Activated T-helper 1 cell treated with anti-CD3 and anti-CD28 coated beads, Interleukin-12 subunit alpha, Interleukin-12 subunit beta, Interleukin-2, Interleukin-4 antibody, amounts not matched to agents 30 ng/mL and 10 ng/mL and 1 ng/mL, durations not matched to agents 14 hours and 24 hours and 36 hours (primary cell): ENCODE measurements at regions of chr6 and their contacts with region 1.

Region 1: DNA sequence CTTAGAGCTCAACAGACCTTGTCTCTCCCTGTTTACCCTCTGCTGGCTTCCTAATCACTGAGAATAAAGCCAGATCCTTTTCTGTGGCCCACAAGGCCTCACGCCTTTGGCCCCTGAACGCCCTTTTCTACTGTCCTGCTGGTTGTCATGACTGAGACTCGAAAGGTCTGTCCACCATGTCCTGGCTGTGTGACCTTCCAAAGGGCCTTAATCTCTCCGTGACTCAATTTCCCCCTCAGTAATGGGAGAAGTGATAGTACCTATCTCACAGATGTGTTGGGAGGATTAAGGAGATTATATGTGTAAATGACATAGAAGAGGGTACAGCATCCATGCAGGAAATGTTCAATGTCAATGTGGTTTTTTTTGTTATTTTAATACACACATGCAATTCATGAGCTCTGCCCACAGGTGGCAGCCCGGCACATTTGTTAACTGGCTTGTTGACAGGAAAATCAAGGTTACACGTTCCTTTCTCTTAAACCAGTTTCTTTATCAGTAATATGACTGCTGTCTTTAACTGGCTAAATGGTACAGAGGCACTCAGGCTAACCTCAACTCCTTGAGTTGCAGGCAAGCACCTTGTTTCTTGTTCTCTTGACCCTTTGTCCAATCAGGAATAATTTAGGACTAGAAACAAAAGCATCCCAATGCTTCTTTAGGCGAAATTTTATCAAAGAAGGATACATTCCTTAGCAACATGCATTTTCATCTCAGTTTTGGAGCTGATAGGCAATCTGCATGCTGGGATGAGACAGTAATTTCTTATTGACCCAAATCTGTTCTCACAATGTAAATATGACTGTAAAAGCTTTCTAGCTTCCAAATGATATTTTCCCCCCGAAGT is 16.6 kb downstream of the SLC22A1 start:
- DNase-seq: peak; percentile 47
- H3K4me3 Mint-ChIP-seq: no peak overlapping the region
- H3K27ac Mint-ChIP-seq: peak overlapping the region; percentile 52
- H3K4me1 Mint-ChIP-seq: peaks cover 18% of the 10 kb centered on the region
- H3K27me3 Mint-ChIP-seq: no peaks in the 10 kb centered on the region

Region 2: DNA sequence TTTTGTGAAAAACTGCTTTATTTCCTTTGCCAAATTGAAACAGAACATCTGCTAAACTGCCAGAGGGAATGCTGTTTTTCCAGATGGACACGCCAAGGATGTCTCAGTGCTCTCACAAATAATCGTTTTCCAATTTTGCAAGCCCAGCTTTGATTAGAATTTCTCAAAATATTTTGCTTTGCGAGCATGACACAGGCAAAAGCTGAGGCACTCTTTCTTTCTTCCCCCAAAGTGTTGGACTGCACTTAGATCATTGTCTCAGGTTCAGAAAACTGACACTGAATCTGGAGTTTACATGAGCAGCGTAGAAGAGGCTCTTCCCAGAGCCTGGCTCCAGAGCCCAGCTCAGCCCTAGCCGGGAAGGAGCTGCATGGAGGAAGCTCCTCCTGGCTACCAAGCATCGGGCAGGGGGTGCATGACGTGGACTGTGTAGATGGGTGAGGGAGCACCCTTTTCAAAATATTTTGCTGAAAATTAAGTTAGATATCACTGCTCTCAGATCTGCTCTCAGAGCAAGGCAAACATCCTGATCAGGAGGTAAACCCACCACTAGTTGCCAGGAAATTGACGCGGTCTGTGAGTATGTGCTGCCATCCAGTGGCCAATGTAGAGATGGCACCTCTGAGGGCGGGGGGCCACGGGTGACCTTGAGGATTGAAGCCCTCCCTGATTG is 317.5 kb after region 1 on chr6:
- intact Hi-C with region 1: loop called (anchors 1 kb)
- DNase-seq: peak; percentile 53
- H3K4me3 Mint-ChIP-seq: no peak overlapping the region
- H3K27ac Mint-ChIP-seq: no peak overlapping the region
- H3K4me1 Mint-ChIP-seq: peaks cover 33% of the 10 kb centered on the region
- H3K27me3 Mint-ChIP-seq: peaks cover 24% of the 10 kb centered on the region

Region 3: DNA sequence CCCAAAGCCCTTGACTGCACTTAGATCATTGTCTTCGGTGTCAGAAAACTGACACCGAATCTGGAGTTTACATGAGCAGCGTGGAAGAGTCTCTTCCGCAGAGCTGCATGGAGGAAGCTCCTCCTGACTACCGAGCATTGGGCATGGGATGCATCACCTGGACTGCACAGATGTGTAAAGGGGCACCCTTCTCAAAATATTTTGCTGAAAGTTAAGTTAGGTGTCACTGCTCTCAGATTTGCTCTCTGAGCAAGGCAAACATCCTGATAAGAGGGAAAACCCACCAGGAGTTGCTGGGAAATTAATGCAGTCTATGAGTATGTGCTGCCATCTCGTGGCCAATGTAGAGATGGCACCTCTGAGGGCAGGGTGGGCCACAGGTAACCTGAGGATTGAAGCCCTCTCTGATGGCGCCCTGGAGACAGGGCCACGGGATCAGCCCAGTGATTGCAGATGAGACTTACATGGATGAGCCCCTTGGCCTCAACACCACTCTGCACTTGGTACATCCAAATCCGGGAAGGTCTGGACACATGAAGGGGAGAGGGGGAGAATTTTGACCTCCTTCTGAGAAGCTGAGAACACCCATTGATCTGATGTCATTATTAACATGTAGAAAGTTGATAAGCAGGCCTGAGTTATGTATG is 396.0 kb after region 1 on chr6:
- intact Hi-C with region 1: loop called (anchors 1 kb)
- DNase-seq: peak; percentile 19
- H3K4me3 Mint-ChIP-seq: no peak overlapping the region
- H3K27ac Mint-ChIP-seq: no peak overlapping the region
- H3K4me1 Mint-ChIP-seq: no peaks in the 10 kb centered on the region
- H3K27me3 Mint-ChIP-seq: peaks cover 18% of the 10 kb centered on the region